ENCODE measurements at regions of chr17 and their contacts with region 1.

Region 1: DNA sequence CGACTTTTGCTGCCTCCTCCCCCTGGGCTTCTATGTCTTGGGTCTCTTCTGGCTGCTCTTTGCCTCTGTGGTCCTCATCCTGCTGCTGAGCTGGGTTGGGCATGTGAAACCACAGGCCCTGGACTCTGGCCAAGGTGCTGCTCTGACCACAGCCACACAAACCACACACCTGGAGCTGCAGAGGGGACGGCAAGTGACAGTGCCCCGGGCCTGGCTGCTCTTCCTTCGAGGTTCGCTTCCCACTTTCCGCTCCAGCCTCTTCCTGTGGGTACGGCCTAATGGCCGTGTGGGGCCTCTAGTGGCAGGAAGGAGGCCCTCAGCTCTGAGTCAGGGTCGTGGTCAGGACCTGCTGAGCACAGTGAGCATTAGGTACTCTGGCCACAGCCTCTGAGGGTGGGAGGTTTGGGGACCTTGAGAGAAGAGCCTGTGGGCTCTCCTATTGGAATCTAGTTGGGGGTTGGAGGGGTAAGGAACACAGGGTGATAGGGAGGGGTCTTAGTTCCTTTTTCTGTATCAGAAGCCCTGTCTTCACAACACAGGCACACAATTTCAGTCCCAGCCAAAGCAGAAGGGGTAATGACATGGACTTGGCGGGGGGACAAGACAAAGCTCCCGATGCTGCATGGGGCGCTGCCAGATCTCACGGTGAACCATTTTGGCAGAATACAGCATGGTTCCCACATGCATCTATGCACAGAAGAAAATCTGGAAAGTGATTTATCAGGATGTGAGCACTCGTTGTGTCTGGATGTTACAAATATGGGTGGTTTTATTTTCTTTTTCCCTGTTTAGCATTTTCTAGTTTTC is 2.3 kb downstream of the GP1BA start:
- DNase-seq: peak; percentile 42
- H3K4me3 Mint-ChIP-seq: peak overlapping the region; percentile 19
- H3K27ac Mint-ChIP-seq: no peak overlapping the region
- H3K4me1 Mint-ChIP-seq: peaks cover 16% of the 10 kb centered on the region
- H3K27me3 Mint-ChIP-seq: no peaks in the 10 kb centered on the region
- CTCF ChIP-seq: peak; percentile 31

Region 2: GRCh38 chr17:4920351-4921048 is 13.9 kb before region 1 on chr17:
- CTCF ChIA-PET with region 1: interaction called, 6 read pairs
- POLR2A ChIA-PET with region 1: interaction called, 51 read pairs
- intact Hi-C with region 1: no loop called
- DNase-seq: peak; percentile 83
- H3K4me3 Mint-ChIP-seq: peak overlapping the region; percentile 39
- H3K27ac Mint-ChIP-seq: peak overlapping the region; percentile 74
- H3K4me1 Mint-ChIP-seq: peaks cover 16% of the 10 kb centered on the region
- H3K27me3 Mint-ChIP-seq: no peaks in the 10 kb centered on the region
- CTCF ChIP-seq: no peak